WTC11 (cell line): ENCODE measurements at regions of chr6 and their contacts with region 1.

Region 1: GRCh38 chr6:118800394-118801071 is 93.4 kb upstream of the ASF1A start:
- DNase-seq: peak; percentile 81
- ATAC-seq: peak; percentile 90
- H3K4me3 Mint-ChIP-seq: peak overlapping the region; percentile 27; the same call in 1 of the 2 replicates
- H3K27ac Mint-ChIP-seq: no peak overlapping the region
- H3K4me1 Mint-ChIP-seq: peaks cover 28% of the 10 kb centered on the region
- H3K27me3 Mint-ChIP-seq: no peaks in the 10 kb centered on the region
- CTCF ChIP-seq: peak; percentile 85

Region 2: DNA sequence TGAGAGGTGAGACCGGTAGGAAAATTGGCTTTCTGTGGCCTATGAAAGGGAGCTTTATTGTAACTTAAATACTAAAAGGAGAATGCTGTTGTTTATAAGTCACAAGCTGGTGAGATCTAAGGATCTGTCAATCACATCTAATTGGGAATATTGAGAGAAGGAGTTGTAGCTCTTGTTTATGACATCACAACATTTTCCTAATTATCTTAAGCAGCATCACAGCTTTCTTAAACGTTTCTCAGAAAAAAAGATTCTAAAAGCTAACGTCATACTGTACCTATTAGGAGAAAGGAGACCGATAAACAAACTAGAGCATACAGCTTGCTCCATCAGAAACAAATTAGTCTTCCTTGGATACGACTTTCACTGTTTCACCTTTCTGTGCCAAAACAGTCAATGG is 69.4 kb before region 1 on chr6:
- CTCF ChIA-PET with region 1: no interaction called
- POLR2A ChIA-PET with region 1: no interaction called
- DNase-seq: no peak
- ATAC-seq: no peak
- H3K4me3 Mint-ChIP-seq: no peak overlapping the region
- H3K27ac Mint-ChIP-seq: no peak overlapping the region
- H3K4me1 Mint-ChIP-seq: peaks cover 13% of the 10 kb centered on the region
- H3K27me3 Mint-ChIP-seq: no peaks in the 10 kb centered on the region
- CTCF ChIP-seq: no peak

Region 3: GRCh38 chr6:118784641-118785164 is 15.8 kb before region 1 on chr6:
- CTCF ChIA-PET with region 1: interaction called, 11 read pairs
- POLR2A ChIA-PET with region 1: no interaction called
- DNase-seq: no peak
- ATAC-seq: peak; percentile 62
- H3K4me3 Mint-ChIP-seq: no peak overlapping the region
- H3K27ac Mint-ChIP-seq: no peak overlapping the region
- H3K4me1 Mint-ChIP-seq: peaks cover 7% of the 10 kb centered on the region; the same call in 1 of the 2 replicates
- H3K27me3 Mint-ChIP-seq: no peaks in the 10 kb centered on the region
- CTCF ChIP-seq: no peak

Region 4: DNA sequence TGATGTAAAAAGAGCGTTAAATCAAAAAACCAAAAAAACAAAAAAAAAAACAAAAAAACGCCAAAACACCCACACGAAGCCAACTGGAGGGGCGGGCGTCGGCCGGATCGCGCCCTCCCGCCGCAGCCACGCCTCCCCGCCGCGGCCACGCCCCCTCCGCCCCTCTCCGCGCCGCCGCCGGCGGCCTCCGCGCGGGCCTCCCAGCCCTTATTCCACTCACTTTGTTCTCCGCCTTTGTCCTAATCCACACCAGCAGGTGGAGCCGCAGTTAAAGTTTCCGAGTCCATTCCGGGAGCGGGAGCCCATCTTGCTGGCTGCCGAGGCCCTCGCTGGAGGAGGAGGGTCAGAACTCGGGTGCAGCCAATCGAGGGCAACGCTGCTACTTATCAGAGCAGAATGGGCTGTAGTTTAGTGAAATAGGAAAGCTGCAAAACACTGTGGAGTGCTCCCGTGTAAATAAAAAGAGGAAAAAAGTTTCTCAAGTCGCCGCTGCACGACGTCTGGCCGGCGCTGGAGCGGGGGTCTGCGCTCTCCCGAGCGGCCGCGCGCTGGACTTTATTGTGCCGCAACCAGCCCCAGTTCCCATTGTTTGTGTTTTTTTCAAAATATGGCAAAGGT is 93.4 kb after region 1 on chr6 and contains the start of gene ASF1A:
- CTCF ChIA-PET with region 1: interaction called, 11 read pairs
- POLR2A ChIA-PET with region 1: no interaction called
- DNase-seq: peak; percentile 94
- ATAC-seq: peak; percentile 84
- H3K4me3 Mint-ChIP-seq: peak within 1 kb of the TSS; percentile 88
- H3K27ac Mint-ChIP-seq: peak within 1 kb of the TSS; percentile 98
- H3K4me1 Mint-ChIP-seq: peaks cover 42% of the 10 kb centered on the region
- H3K27me3 Mint-ChIP-seq: no peaks in the 10 kb centered on the region
- CTCF ChIP-seq: no peak; the same call in 1 of the 2 replicates
- total RNA-seq, gene ASF1A: 30.9 to 36.7 TPM (median 32.0 TPM) in 3 replicates